HCT116 (cell line): ENCODE measurements at regions of chr6 and their contacts with region 1.

Region 1: GRCh38 chr6:125956506-125957390 is at the start of gene HINT3:
- DNase-seq: peak; percentile 98
- ATAC-seq: peak; percentile 90
- H3K4me3 ChIP-seq: peak within 1 kb of the TSS; percentile 69 to 73
- H3K27ac ChIP-seq: peak within 1 kb of the TSS; percentile 65
- H3K4me1 ChIP-seq: peaks cover 10 to 17% of the 10 kb centered on the region in 2 experiments; a peak in 3 of 4 replicates
- H3K27me3 ChIP-seq: no peaks in the 10 kb centered on the region
- CTCF ChIP-seq: peak; percentile 93 to 95 (median 94)
- POLR2A ChIP-seq: peak; percentile 43
- RAD21 ChIP-seq: peak; percentile 74
- total RNA-seq, gene HINT3: 12.7 TPM

Region 2: GRCh38 chr6:125779924-125780539 is 176.7 kb before region 1 on chr6:
- CTCF ChIA-PET with region 1: interaction called, 10 read pairs
- POLR2A ChIA-PET with region 1: no interaction called
- RAD21 ChIA-PET with region 1: no interaction called
- intact Hi-C with region 1: no loop called
- DNase-seq: peak; percentile 83
- ATAC-seq: peak; percentile 91
- H3K4me3 ChIP-seq: peak overlapping the region; percentile 39 to 51
- H3K27ac ChIP-seq: peak overlapping the region; percentile 24; the same call in 1 of the 2 replicates
- H3K4me1 ChIP-seq: peaks cover 0 to 14% of the 10 kb centered on the region in 2 experiments; a peak in 3 of 4 replicates
- H3K27me3 ChIP-seq: no peaks in the 10 kb centered on the region
- CTCF ChIP-seq: peak in 1 of 3 experiments; percentile 4; a peak in 1 of 6 replicates
- POLR2A ChIP-seq: no peak
- RAD21 ChIP-seq: no peak

Region 3: DNA sequence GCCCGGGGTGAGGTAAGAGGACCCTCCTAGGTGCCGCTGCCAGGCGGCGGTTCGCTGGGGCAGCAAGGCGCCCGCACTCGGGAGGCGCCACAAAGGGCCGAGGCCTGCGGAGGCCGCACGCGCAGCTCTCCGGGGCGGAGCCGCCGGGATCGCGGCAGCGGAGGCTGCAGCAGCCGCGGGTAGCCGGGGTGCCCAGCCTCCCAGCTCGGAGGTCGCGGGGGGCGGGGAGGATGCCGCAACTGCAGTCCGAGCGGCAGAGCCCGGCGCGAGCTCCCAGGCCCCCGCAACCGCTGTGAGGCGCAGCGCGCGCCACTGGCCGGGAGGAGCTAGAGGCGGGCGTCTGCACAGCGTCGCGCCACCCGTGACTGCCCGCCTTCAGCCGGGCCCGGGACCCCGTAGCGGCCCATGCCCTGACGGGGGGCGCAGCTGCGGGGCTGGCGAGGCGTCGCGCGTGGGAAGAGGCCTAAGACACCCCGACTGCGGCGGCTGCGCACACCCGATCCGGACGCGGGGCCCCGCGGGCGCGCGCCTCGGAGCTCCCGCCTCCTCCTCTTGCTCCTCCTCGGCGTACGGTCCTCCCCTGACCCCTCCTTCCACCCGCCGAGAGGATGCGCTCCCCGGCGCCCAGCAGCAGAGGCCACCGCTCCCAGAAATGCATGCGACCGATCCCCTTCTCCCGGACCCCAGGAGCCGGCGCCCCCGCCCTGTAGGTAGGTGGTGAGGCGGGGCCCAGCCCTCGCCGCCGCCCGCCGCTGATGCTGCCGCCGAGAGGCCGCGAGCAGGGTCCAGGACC is 166.2 kb before region 1 on chr6 and contains the start of gene NCOA7:
- CTCF ChIA-PET with region 1: interaction called, 24 read pairs
- POLR2A ChIA-PET with region 1: interaction called, 8 read pairs
- RAD21 ChIA-PET with region 1: interaction called, 5 to 7 read pairs
- intact Hi-C with region 1: loop called (anchors 2 kb)
- DNase-seq: no peak
- ATAC-seq: peak; percentile 89
- H3K4me3 ChIP-seq: peak within 1 kb of the TSS; percentile 78 to 80
- H3K27ac ChIP-seq: peak within 1 kb of the TSS; percentile 75
- H3K4me1 ChIP-seq: peaks cover 20 to 25% of the 10 kb centered on the region in 2 experiments; a peak in 3 of 4 replicates
- H3K27me3 ChIP-seq: no peaks in the 10 kb centered on the region
- CTCF ChIP-seq: no peak
- POLR2A ChIP-seq: peak; percentile 52
- RAD21 ChIP-seq: no peak
- total RNA-seq, gene NCOA7: 13.8 TPM

Region 4: DNA sequence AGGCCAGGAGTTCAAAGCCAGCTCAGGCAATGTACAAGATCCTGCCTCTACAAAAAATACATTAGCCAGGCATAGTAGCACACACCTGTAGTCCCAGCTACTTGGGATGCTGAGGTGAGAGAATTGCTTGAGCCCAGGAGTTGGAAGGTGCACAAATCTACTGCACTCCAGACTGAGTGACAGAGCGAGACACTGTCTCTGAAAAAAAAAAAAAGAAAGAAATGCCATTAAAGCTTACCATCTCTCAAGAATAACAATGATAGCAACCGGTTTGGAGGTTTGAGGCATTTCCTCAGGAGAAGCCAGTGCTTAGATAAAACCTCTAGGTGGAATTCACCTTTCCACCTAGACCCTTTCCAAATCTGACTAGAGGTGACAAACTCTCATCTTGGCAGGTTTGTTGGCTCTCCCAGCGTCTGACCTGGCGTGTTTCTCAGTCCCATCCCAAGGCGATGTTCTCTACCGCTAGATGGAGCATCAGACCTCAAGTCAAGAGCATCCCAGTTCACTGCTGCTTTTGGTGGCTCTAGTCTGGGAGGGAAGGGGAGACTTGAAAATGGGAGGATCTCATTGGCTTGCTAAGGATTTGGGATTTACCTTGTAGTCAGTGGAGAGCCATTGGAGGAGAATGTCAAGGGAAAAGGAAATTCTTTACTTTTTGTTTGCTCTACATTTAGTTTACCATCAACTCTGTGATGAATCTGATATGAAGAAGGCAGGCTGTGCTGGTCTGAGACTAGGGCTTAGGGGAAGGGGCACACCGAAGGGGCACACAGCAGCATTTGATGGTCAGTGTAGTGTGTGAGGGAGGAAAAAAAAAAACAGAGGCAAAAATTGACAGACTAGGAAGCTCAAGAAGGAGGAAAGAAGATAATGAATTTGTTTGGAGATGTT is 98.1 kb before region 1 on chr6:
- CTCF ChIA-PET with region 1: interaction called, 4 read pairs
- POLR2A ChIA-PET with region 1: no interaction called
- RAD21 ChIA-PET with region 1: no interaction called
- intact Hi-C with region 1: loop called (anchors 1 kb)
- DNase-seq: peak; percentile 42
- ATAC-seq: peak; percentile 96
- H3K4me3 ChIP-seq: no peak overlapping the region
- H3K27ac ChIP-seq: no peak overlapping the region
- H3K4me1 ChIP-seq: no peaks in the 10 kb centered on the region
- H3K27me3 ChIP-seq: no peaks in the 10 kb centered on the region
- CTCF ChIP-seq: peak; percentile 49 to 68 (median 63); a peak in 5 of 6 replicates
- POLR2A ChIP-seq: no peak
- RAD21 ChIP-seq: peak; percentile 70

Region 5: DNA sequence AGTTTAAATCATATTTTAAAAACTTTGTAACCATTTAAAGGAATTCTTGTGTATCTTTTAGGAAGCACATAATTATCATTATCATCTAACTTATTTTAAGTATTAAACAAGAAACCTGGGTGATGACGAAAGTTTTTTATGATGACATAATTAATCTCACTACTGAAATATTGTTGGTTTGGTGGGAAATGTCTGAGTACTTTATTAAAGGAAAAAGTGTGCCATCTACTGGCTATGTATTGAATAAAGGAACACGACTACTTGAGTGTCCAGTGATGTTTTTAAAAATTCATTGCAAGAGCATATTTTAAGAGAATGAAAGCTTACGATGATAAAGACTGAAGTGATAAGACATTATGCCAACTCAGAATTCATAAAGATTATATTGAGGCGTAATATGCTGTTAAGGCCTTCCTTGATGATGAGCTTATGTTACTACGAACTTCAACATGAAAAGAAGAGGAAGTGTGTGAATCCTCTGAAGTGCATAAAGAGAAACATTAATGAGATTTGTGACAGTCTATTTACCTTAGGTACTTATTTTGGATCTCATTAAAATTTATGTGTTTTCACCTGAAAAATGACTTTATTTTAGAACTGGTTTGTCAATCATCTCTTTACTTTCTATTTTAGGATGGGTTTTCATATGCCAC is 17.6 kb after region 1 on chr6:
- CTCF ChIA-PET with region 1: interaction called, 13 read pairs
- POLR2A ChIA-PET with region 1: no interaction called
- RAD21 ChIA-PET with region 1: no interaction called
- intact Hi-C with region 1: no loop called
- DNase-seq: peak; percentile 46
- ATAC-seq: peak; percentile 77
- H3K4me3 ChIP-seq: no peak overlapping the region
- H3K27ac ChIP-seq: no peak overlapping the region
- H3K4me1 ChIP-seq: no peaks in the 10 kb centered on the region
- H3K27me3 ChIP-seq: no peaks in the 10 kb centered on the region
- CTCF ChIP-seq: peak; percentile 35 to 67 (median 52); a peak in 5 of 6 replicates
- POLR2A ChIP-seq: no peak
- RAD21 ChIP-seq: peak; percentile 71

Region 6: DNA sequence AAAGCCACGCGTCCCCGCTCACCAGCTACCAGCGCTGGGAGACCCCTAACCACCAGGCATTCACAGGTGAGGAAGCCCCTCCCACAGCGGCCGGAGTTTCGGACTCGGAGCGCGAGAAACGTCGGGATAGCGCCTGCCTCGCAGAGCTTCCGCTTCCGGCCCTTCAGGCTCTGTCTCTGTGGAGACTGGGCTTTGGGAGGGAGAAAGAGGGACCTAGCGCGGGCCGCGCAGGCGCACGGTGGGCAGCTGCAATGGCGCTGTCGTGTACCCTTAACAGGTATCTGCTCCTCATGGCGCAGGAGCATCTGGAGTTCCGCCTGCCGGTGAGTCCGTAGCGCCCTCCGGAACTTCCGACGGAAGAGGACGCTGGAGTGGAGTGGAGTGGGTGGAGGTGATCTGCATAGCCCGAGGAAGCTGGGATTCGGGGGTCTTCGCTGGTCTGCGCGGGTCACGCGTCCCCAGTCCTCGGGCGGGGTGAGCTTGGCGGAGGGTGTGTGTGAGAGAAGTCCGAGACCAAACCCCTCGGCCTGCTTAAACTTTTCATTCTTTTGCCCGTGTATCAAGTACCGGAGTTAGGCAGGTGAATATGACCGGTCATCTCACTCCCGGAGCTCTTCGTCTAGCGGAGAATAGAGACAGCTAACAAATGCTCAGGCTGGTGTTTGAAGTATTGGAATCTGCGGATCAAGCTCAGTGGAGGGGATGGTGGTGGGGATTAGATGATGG is 29.7 kb after region 1 on chr6 and contains the start of gene TRMT11:
- CTCF ChIA-PET with region 1: interaction called, 11 read pairs
- POLR2A ChIA-PET with region 1: no interaction called
- RAD21 ChIA-PET with region 1: no interaction called
- intact Hi-C with region 1: no loop called
- DNase-seq: peak; percentile 84
- ATAC-seq: peak; percentile 96
- H3K4me3 ChIP-seq: peak within 1 kb of the TSS; percentile 77 to 90
- H3K27ac ChIP-seq: peak within 1 kb of the TSS; percentile 81
- H3K4me1 ChIP-seq: peaks cover 7 to 39% of the 10 kb centered on the region in 2 experiments
- H3K27me3 ChIP-seq: no peaks in the 10 kb centered on the region
- CTCF ChIP-seq: 0 out of 6 replicates have a peak, but pooled peaks of 1 of the 3 experiments have one; percentile 9
- POLR2A ChIP-seq: peak; percentile 91
- RAD21 ChIP-seq: no peak
- total RNA-seq, gene TRMT11: 41.8 TPM